PC-9 (cell line): ENCODE measurements at regions of chr4 and their contacts with region 1.

Region 1: GRCh38 chr4:78797777-78798284 is 21.7 kb downstream of the BMP2K start:
- DNase-seq: no peak
- H3K4me3 ChIP-seq: no peak overlapping the region
- H3K27ac ChIP-seq: no peak overlapping the region
- H3K4me1 ChIP-seq: no peaks in the 10 kb centered on the region
- H3K27me3 ChIP-seq: no peaks in the 10 kb centered on the region
- CTCF ChIP-seq: no peak

Region 2: DNA sequence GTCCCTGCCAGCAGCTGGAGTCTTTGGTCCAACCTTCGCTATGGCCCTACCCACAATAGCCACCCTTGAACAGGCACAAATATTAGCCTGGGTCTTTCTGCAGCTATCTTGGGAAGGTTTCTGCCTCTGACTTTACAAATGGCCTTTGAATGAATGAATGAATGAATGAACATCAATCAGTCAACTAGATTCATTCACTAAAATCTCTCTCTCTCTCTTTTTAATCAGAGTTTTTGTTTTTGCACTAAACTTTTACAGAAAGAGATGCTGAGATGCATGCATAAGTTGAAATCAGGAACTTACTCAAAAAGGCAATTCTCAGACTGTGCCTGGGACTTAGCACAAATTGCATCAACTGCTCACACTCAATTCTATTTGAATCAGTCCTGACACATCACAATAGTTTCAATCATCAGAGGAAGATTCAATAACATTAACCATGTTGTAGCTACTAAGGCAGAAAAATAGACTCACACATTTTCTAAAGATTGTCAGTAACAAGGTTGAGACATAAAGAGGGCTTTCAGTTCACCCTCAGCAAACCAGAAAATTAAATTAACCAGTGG is 191.2 kb before region 1 on chr4:
- CTCF ChIA-PET with region 1: no interaction called
- POLR2A ChIA-PET with region 1: interaction called, 13 read pairs
- intact Hi-C with region 1: no loop called
- DNase-seq: no peak
- H3K4me3 ChIP-seq: no peak overlapping the region
- H3K27ac ChIP-seq: no peak overlapping the region
- H3K4me1 ChIP-seq: no peaks in the 10 kb centered on the region
- H3K27me3 ChIP-seq: no peaks in the 10 kb centered on the region
- CTCF ChIP-seq: no peak